Astrocyte of the cerebellum (primary cell): ENCODE measurements at regions of chr9 and their contacts with region 1.

Region 1: DNA sequence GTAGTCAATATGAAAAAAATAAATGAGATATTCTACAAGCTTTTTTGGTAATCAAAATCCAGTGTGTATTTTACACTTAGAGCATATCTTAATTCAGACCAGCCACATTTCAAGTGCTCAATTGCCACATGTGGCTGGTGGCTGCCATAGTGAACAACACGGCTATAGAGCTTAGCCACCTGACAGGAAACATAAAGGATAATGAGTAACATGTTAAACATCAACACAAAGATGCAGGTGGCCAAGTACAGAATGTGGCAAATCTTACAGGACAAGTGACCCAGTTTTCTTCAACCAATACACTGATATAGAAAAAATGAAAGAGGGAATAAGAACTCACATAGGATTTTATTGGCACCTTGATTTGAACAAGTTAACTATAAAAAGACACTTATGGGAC is 61.4 kb downstream of the KIF24 start:
- DNase-seq: no peak
- H3K4me3 ChIP-seq: no peak overlapping the region
- CTCF ChIP-seq: no peak

Region 2: GRCh38 chr9:34222451-34222850 is 45.2 kb before region 1 on chr9:
- in situ Hi-C with region 1: no loop called
- DNase-seq: no peak
- H3K4me3 ChIP-seq: no peak overlapping the region
- CTCF ChIP-seq: no peak

Region 3: DNA sequence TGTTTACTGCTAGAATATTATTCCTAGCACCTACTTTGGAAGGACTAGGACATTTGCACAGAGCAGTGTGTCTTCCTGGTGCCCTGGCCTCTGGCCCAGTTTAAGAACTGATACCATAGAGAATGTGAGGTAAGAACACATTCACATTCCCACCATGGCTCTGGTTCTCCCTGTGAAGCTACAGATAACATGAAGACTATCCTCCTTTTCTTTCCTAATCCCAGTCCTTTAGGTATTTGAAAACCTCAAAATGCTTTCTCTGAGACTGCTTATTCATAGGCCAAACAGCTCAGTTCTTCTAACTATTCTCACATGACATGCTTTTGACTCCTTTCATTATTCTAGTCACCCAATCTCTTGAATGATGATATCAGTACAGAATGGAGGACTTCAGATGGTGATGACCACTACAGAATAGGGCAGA is 178.8 kb after region 1 on chr9:
- in situ Hi-C with region 1: loop called (anchors 10 kb)
- DNase-seq: no peak
- H3K4me3 ChIP-seq: no peak overlapping the region
- CTCF ChIP-seq: no peak

Region 4: GRCh38 chr9:34611829-34612630 is 344.4 kb after region 1 on chr9 and contains the start of gene RPP25L:
- in situ Hi-C with region 1: loop called (anchors 10 kb)
- DNase-seq: peak; percentile 28
- H3K4me3 ChIP-seq: peak within 1 kb of the TSS; percentile 79
- CTCF ChIP-seq: no peak